Psoas muscle (tissue), 8 donors: ENCODE measurements at regions of chr9 and their contacts with region 1.

Region 1: GRCh38 chr9:2526071-2526828 is 95.3 kb upstream of the VLDLR start:
- DNase-seq: no peak
- ATAC-seq: no peak
- H3K4me3 ChIP-seq: no peak overlapping the region
- H3K27ac ChIP-seq: no peak overlapping the region
- H3K4me1 ChIP-seq: no peaks in the 10 kb centered on the region
- H3K27me3 ChIP-seq: no peaks in the 10 kb centered on the region
- CTCF ChIP-seq: no peak

Region 2: DNA sequence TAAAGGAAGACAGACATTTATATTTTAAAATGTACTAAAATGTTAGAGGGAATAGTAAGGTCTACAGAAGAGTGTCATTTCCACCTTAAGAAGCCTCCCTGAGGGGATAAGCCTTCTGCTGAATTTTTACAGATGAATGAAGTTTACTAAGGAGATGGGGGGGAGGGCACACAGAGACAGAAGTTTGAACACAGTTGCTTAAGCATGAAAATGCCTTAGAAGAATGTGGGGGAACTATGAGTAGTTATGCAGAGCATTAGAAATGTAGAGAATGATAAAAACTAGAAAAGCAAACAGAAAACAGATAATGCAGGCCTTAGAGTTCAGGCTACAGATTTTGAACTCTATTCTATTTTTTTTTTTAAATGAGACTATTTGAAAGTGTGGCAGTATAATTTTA is 136.8 kb before region 1 on chr9:
- intact Hi-C with region 1: no loop called
- DNase-seq: no peak
- ATAC-seq: no peak
- H3K4me3 ChIP-seq: no peak overlapping the region
- H3K27ac ChIP-seq: no peak overlapping the region
- H3K4me1 ChIP-seq: no peaks in the 10 kb centered on the region
- H3K27me3 ChIP-seq: no peaks in the 10 kb centered on the region
- CTCF ChIP-seq: no peak

Region 3: DNA sequence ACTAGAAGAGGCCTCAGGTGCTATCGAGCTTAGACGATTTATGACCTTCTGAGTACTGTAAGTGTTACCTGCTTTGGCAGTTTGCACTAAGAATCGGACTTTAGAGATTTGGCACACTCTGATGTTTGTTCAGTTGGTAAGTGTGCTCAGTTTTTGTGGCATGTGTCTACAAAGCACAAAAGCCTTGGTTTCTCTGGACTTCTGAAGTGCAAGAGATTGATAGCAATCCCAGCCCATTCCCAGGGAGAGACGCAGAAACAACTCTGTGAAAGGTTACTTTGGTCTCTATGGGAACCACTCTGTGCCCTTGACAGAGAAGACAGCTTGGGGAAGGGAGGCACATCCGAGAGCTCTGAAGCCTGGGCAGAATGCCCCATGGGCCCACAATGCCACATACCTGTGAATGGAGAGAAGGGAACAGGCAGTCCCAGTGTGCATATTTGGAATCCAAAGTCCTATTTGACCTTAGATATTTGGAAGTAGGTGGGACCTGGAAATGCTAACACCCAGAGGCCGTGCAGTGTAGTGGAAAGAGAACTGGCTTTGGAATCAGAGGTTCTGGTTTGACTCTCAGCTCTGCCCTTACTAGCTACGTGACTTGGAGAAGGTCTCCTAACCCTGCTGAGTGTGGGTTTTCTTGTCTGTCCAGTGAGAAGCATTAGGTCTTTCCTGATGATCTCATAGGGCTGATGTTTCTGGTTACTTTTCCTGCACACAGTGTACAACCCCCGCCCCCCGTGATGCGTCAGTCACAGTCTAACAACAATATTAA is 98.9 kb before region 1 on chr9:
- intact Hi-C with region 1: no loop called
- DNase-seq: no peak
- ATAC-seq: peak in 2 of 4 donors; percentile 49 to 65
- H3K4me3 ChIP-seq: no peak overlapping the region
- H3K27ac ChIP-seq: no peak overlapping the region
- H3K4me1 ChIP-seq: no peaks in the 10 kb centered on the region
- H3K27me3 ChIP-seq: no peaks in the 10 kb centered on the region
- CTCF ChIP-seq: no peak

Region 4: GRCh38 chr9:2583308-2584013 is 57.2 kb after region 1 on chr9:
- intact Hi-C with region 1: loop called in 1 of 2 experiments (anchors 10 kb)
- DNase-seq: no peak
- ATAC-seq: peak in 3 of 4 donors; percentile 34 to 77 (median 40)
- H3K4me3 ChIP-seq: no peak overlapping the region
- H3K27ac ChIP-seq: no peak overlapping the region
- H3K4me1 ChIP-seq: peaks cover 16% of the 10 kb centered on the region
- H3K27me3 ChIP-seq: no peaks in the 10 kb centered on the region
- CTCF ChIP-seq: no peak